ENCODE measurements at regions of chr15 and their contacts with region 1.

Region 1: GRCh38 chr15:60585743-60586708 is 107.1 kb upstream of the ICE2 start:
- DNase-seq: peak; percentile 77 to 83 (median 79)
- H3K4me3 ChIP-seq: no peak overlapping the region
- H3K4me3 Mint-ChIP-seq: peak overlapping the region; percentile 69 to 97 (median 82)
- H3K27ac ChIP-seq: peak overlapping the region; percentile 92
- H3K27ac Mint-ChIP-seq: peak overlapping the region; percentile 91 to 98 (median 93)
- H3K4me1 ChIP-seq: peaks cover 91% of the 10 kb centered on the region
- H3K4me1 Mint-ChIP-seq: peaks cover 68 to 92% (median 80%) of the 10 kb centered on the region in 4 donors
- H3K27me3 ChIP-seq: no peaks in the 10 kb centered on the region
- H3K27me3 Mint-ChIP-seq: no peaks in the 10 kb centered on the region

Region 2: GRCh38 chr15:60292540-60292939 is 293.5 kb before region 1 on chr15:
- CTCF ChIA-PET with region 1: no interaction called
- POLR2A ChIA-PET with region 1: no interaction called
- intact Hi-C with region 1: no loop called
- DNase-seq: no peak
- H3K4me3 ChIP-seq: no peak overlapping the region
- H3K4me3 Mint-ChIP-seq: no peak overlapping the region
- H3K27ac ChIP-seq: no peak overlapping the region
- H3K27ac Mint-ChIP-seq: no peak overlapping the region
- H3K4me1 ChIP-seq: no peaks in the 10 kb centered on the region
- H3K4me1 Mint-ChIP-seq: no peaks in the 10 kb centered on the region
- H3K27me3 ChIP-seq: no peaks in the 10 kb centered on the region
- H3K27me3 Mint-ChIP-seq: peaks cover 7 to 12% of the 10 kb centered on the region in 2 donors

Region 3: GRCh38 chr15:60520825-60521368 is 65.1 kb before region 1 on chr15:
- CTCF ChIA-PET with region 1: interaction called, 28 read pairs
- POLR2A ChIA-PET with region 1: interaction called, 20 read pairs
- intact Hi-C with region 1: loop called (anchors 5 kb)
- DNase-seq: peak; percentile 71 to 80 (median 73)
- H3K4me3 ChIP-seq: no peak overlapping the region
- H3K4me3 Mint-ChIP-seq: peak overlapping the region in 4 of 8 donors; percentile 33 to 58 (median 43)
- H3K27ac ChIP-seq: no peak overlapping the region
- H3K27ac Mint-ChIP-seq: peak overlapping the region; percentile 84 to 90 (median 87)
- H3K4me1 ChIP-seq: peaks cover 32% of the 10 kb centered on the region
- H3K4me1 Mint-ChIP-seq: peaks cover 46 to 74% (median 59%) of the 10 kb centered on the region in 4 donors
- H3K27me3 ChIP-seq: no peaks in the 10 kb centered on the region
- H3K27me3 Mint-ChIP-seq: no peaks in the 10 kb centered on the region

Region 4: GRCh38 chr15:60548101-60548500 is 37.9 kb before region 1 on chr15:
- CTCF ChIA-PET with region 1: interaction called, 53 read pairs
- POLR2A ChIA-PET with region 1: interaction called, 381 read pairs
- intact Hi-C with region 1: loop called (anchors 2 kb)
- DNase-seq: peak; percentile 47 to 68 (median 58)
- H3K4me3 ChIP-seq: no peak overlapping the region
- H3K4me3 Mint-ChIP-seq: peak overlapping the region; percentile 68 to 86 (median 77)
- H3K27ac ChIP-seq: peak overlapping the region; percentile 68
- H3K27ac Mint-ChIP-seq: peak overlapping the region; percentile 92 to 99 (median 97)
- H3K4me1 ChIP-seq: peaks cover 100% of the 10 kb centered on the region
- H3K4me1 Mint-ChIP-seq: peaks cover 80 to 100% (median 90%) of the 10 kb centered on the region in 4 donors
- H3K27me3 ChIP-seq: no peaks in the 10 kb centered on the region
- H3K27me3 Mint-ChIP-seq: no peaks in the 10 kb centered on the region

Region 5: DNA sequence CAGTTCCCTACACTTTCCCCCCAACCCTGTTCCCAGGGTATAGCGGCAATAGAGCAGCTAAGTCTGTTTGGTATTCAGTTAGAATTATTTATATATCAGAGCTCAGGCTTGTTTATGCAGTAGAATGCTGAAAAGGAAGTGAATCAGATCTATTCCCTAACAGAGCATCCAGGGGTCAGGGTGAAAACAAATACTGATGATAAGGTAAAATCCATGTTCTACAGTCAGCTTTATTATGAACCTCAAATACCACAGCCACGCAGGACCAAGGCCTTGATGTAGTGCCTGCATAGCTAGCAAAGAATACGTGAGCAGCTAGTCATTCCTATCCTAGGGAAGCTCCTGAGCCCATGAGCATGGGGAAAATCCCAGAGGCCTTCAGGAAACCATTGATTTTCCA is 122.7 kb after region 1 on chr15:
- CTCF ChIA-PET with region 1: interaction called, 3 read pairs
- POLR2A ChIA-PET with region 1: interaction called, 9 read pairs
- intact Hi-C with region 1: loop called (anchors 5 kb)
- DNase-seq: no peak
- H3K4me3 ChIP-seq: no peak overlapping the region
- H3K4me3 Mint-ChIP-seq: peak overlapping the region in 4 of 8 donors; percentile 0 to 48 (median 6)
- H3K27ac ChIP-seq: no peak overlapping the region
- H3K27ac Mint-ChIP-seq: peak overlapping the region in 3 of 7 donors; percentile 19 to 62 (median 41)
- H3K4me1 ChIP-seq: peaks cover 38% of the 10 kb centered on the region
- H3K4me1 Mint-ChIP-seq: peaks cover 35 to 53% (median 41%) of the 10 kb centered on the region in 4 donors
- H3K27me3 ChIP-seq: no peaks in the 10 kb centered on the region
- H3K27me3 Mint-ChIP-seq: no peaks in the 10 kb centered on the region

Region 6: DNA sequence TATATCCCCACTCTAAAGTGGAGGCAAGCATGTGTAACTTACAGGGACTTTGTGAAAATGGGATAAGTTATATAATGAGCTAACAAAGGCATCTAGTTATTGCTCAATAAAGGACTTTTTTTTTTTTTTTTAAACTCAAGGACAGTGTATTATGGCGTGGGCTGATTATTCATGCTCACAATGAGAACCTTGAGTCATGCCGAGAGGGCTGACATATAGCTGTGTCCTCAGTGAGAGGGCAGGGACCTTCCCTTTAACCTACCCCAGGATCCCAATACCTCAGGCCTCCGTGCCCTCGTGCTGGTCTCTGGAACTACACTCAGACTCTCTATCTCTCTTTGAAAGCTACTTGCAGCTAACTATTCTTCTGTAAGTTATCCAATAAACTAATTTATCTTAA is 212.8 kb after region 1 on chr15:
- CTCF ChIA-PET with region 1: interaction called, 4 read pairs
- POLR2A ChIA-PET with region 1: interaction called, 15 read pairs
- intact Hi-C with region 1: no loop called
- DNase-seq: peak in 1 of 5 donors; percentile 57
- H3K4me3 ChIP-seq: no peak overlapping the region
- H3K4me3 Mint-ChIP-seq: peak overlapping the region in 5 of 8 donors; percentile 25 to 55 (median 48)
- H3K27ac ChIP-seq: peak overlapping the region; percentile 56
- H3K27ac Mint-ChIP-seq: peak overlapping the region; percentile 87 to 98 (median 93)
- H3K4me1 ChIP-seq: peaks cover 95% of the 10 kb centered on the region
- H3K4me1 Mint-ChIP-seq: peaks cover 67 to 97% (median 85%) of the 10 kb centered on the region in 4 donors
- H3K27me3 ChIP-seq: no peaks in the 10 kb centered on the region
- H3K27me3 Mint-ChIP-seq: no peaks in the 10 kb centered on the region

Region 7: GRCh38 chr15:60865507-60865906 is 279.5 kb after region 1 on chr15:
- CTCF ChIA-PET with region 1: interaction called, 81 read pairs
- POLR2A ChIA-PET with region 1: interaction called, 26 read pairs
- intact Hi-C with region 1: loop called (anchors 1 kb)
- DNase-seq: no peak
- H3K4me3 ChIP-seq: no peak overlapping the region
- H3K4me3 Mint-ChIP-seq: no peak overlapping the region
- H3K27ac ChIP-seq: no peak overlapping the region
- H3K27ac Mint-ChIP-seq: peak overlapping the region in 1 of 7 donors; percentile 43
- H3K4me1 ChIP-seq: peaks cover 6% of the 10 kb centered on the region
- H3K4me1 Mint-ChIP-seq: peaks cover 14 to 25% (median 16%) of the 10 kb centered on the region in 4 donors
- H3K27me3 ChIP-seq: no peaks in the 10 kb centered on the region
- H3K27me3 Mint-ChIP-seq: no peaks in the 10 kb centered on the region

Region 8: DNA sequence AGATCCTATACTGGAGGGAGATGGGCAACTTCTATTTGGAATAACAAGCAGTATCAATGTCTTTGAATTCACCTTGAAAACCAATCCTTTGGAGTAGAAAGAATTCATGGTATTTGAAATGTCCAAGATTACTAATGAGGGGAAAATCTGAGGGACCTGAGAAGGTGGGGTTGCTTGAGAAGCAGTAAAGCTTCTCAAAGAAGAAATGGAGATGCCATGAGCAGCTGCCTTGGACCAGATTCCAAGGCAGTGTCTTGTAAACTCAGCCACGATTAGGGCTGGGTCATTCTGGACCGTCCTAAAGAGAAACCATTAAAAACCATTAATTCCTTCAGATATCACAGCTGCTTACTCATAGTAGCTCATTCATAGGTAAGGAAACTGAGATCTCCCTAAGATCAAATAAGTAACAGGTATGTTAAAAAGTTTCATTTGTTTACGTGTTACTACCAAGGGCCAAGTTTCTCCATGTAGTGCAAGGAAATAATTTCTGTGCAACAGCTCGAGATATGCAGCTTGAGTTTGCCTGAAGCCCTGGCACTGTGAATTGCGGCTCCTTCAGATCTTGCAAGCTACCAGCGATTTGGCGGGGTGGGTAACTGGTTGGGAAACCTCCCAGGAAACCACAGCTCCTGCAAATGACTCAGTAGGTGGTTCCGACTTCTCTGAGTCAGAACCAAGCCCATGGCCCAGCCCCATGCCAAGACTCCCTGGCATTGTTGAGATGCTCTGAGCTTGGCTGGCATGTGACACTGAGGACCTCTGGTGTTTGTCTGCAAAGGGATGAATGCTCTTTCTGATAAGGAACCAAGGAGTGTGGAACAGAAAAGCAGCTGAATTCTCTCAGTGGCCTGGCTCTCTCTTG is 346.3 kb after region 1 on chr15:
- CTCF ChIA-PET with region 1: interaction called, 13 read pairs
- POLR2A ChIA-PET with region 1: interaction called, 7 read pairs
- intact Hi-C with region 1: loop called (anchors 5 kb)
- DNase-seq: peak; percentile 52 to 86 (median 61)
- H3K4me3 ChIP-seq: no peak overlapping the region
- H3K4me3 Mint-ChIP-seq: peak overlapping the region in 6 of 8 donors; percentile 5 to 65 (median 31)
- H3K27ac ChIP-seq: no peak overlapping the region
- H3K27ac Mint-ChIP-seq: peak overlapping the region in 4 of 7 donors; percentile 8 to 57 (median 55)
- H3K4me1 ChIP-seq: peaks cover 14% of the 10 kb centered on the region
- H3K4me1 Mint-ChIP-seq: peaks cover 9 to 25% (median 14%) of the 10 kb centered on the region in 4 donors
- H3K27me3 ChIP-seq: no peaks in the 10 kb centered on the region
- H3K27me3 Mint-ChIP-seq: no peaks in the 10 kb centered on the region

Measured in CD4-positive, alpha-beta memory T cell (primary cell).